Cardiac septum (tissue), 1 donor: ENCODE measurements at regions of chr2 and their contacts with region 1.

Region 1: DNA sequence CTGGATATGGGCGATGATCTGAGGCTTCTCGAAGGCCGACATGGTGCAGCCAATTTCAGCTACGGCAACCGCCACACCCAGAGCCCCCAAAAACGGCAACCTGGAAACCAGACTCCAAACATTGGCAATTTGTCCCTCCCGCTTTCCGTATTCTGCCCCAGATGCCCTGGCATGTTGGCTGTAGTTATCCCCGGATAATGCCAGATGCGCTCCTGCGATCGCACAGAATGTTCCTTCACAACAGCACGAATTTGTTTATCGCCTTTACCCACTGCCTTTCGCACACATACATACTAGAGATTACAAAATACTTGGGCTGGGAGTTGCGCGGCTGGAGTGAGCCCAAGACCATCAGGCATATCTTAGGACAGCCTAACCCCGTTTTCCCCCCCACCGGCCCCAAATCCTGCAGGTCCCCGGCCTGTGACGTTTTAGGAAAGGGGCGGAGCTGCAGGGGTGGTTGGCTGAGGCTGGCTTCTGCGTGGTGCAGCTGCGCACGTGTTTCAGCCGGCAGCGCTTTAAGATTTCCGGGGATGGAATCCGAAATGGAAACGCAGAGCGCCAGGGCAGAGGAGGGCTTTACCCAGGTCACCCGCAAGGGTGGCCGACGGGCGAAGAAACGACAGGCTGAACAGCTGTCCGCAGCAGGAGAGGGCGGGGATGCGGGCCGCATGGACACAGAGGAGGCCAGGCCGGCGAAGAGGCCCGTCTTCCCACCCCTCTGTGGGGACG is at the start of gene PNO1:
- DNase-seq: peak; percentile 98
- total RNA-seq, gene PNO1: 10.8 TPM

Region 2: GRCh38 chr2:68062680-68063387 is 94.7 kb before region 1 on chr2 and contains the start of gene C1D:
- intact Hi-C with region 1: loop called (anchors 10 kb)
- DNase-seq: peak; percentile 97
- total RNA-seq, gene C1D: 17.9 TPM

Region 3: DNA sequence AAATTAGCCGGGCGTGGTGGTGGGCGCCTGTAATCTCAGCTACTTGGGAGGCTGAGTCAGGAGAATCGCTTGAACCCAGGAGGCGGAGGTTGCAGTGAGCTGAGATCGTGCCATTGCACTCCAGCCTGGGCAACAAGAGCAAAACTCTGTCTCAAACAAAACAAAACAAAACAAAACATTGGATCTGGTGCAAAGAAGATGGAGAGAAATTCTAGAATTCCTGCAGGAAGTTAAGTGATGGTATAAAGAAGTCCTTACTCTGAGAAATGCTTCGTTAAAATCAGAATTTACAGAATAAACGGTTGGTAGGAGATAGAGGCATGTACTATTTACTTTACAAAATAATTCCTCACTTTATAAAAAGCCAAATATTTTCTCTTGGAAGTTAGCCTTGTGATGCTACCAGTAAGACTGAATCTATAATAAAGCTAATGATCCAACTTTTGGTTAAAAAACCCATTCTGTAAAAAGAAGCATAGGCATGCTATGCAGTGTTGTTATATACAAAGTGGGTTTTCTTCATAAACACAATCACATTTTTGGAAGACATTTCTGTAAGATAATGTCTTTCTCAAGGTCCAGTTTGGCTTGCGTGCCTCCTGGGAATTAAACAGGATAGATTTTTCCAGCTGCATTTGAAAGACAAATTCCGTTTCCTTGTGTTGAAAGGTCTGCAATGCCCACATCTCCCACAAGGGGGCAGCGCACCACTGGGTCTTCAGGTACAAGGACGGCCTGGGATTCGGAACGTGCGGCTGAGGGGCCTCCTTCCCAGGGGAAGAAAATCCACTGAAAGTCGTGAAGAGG is 35.5 kb before region 1 on chr2:
- intact Hi-C with region 1: no loop called
- DNase-seq: peak; percentile 91

Region 4: DNA sequence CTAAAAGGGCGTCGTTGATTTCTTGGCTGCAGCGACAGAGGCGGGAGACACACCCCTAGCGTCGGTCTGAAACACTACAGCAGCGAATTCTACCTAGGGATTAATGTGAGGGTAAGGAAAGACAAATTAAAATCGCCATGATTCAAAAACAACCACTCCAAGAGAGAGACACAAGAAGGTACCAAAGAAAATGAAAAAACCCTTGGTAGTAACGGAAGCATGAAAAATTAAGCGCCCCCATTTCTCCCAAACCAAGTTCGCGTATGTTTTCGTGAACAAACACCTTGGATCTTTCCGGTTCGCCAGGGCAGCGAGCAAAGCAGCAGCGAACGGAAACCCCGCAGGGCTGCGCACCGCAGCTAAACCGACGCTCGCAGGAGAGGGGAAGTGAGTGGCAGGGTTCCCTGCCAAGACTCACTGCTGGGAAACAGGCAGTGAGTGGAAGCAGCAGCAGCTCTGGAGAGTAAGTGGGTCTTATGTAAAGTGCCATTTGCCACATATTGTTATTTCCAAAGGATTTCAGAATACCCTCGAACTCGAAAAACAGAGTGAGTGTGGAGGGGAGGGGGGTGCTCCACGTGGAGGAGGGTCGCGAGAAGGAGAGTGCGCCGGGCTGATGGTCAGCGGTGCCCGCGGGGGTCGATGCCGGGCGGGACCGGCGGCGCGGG is 93.8 kb after region 1 on chr2:
- intact Hi-C with region 1: loop called (anchors 2 kb)
- DNase-seq: peak; percentile 82

Region 5: DNA sequence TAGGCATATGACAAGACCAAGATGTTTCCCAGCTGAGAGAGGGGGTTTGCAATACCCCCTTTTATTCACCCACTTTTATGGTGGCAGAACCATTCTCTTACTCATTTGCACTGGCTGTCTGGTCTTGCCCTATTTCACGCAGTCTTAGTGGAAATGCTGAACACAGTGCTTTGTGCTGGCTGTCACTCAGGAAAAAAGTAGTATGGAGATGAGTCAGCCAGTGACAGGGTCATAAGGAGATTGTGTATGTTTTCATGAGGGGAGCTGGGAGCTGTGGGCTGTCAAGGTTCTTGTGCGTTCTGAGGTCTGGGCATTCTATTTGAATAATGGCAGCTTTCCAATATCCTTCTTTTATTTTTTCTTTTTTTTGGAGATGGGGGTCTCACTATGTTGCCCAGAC is 173.1 kb after region 1 on chr2:
- intact Hi-C with region 1: no loop called
- DNase-seq: no peak